H1 (cell line): ENCODE measurements at regions of chr19 and their contacts with region 1.

Region 1: GRCh38 chr19:46192992-46193650 is 36.4 kb upstream of the IGFL1 start:
- DNase-seq: no peak
- H3K4me3 ChIP-seq: no peak overlapping the region
- H3K27ac ChIP-seq: no peak overlapping the region
- H3K4me1 ChIP-seq: no peaks in the 10 kb centered on the region
- H3K27me3 ChIP-seq: no peaks in the 10 kb centered on the region
- CTCF ChIP-seq: no peak
- EP300 ChIP-seq: no peak
- POLR2A ChIP-seq: no peak
- RAD21 ChIP-seq: no peak

Region 2: GRCh38 chr19:46090444-46090843 is 102.7 kb before region 1 on chr19:
- CTCF ChIA-PET with region 1: interaction called, 10 read pairs
- POLR2A ChIA-PET with region 1: no interaction called
- DNase-seq: no peak
- H3K4me3 ChIP-seq: no peak overlapping the region
- H3K27ac ChIP-seq: no peak overlapping the region
- H3K4me1 ChIP-seq: no peaks in the 10 kb centered on the region
- H3K27me3 ChIP-seq: peaks cover 0 to 2% (median 0%) of the 10 kb centered on the region in 4 experiments; a peak in 1 of 7 replicates
- CTCF ChIP-seq: no peak
- EP300 ChIP-seq: no peak
- POLR2A ChIP-seq: no peak
- RAD21 ChIP-seq: no peak

Region 3: DNA sequence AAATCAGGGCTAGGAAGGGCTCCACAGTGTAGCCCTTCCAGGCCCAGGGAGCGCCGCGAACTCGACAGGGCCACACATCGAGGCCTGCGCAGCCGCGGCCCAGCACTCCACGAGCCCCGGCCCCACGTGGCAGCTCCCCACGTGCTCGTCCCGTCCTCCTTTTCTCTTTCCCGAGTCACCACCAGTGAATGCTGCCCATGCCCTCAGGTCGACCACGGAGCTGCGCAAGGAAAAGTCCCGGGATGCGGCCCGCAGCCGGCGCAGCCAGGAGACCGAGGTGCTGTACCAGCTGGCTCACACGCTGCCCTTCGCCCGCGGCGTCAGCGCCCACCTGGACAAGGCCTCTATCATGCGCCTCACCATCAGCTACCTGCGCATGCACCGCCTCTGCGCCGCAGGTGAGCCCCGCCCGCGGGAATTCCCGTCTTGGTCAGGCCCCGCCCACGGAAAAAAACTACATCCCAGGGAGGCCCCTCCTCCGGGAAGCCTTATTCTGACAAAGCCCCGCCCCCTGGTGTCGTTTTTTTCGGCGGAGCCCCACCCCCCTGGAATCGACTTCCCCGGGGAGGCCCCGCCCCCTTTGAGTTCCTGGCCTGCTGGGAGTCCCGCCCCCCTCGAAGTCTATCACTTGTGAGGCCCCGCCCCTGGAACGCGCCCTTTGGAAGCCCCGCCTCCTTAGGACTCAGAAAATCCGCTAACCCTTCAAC is 110.7 kb after region 1 on chr19:
- CTCF ChIA-PET with region 1: no interaction called
- POLR2A ChIA-PET with region 1: no interaction called
- DNase-seq: peak; percentile 94 to 99
- H3K4me3 ChIP-seq: peak overlapping the region; percentile 9 to 49 (median 22); a peak in 6 of 8 replicates
- H3K27ac ChIP-seq: peak overlapping the region; percentile 68
- H3K4me1 ChIP-seq: peaks cover 6 to 32% (median 27%) of the 10 kb centered on the region in 4 experiments
- H3K27me3 ChIP-seq: no peaks in the 10 kb centered on the region
- CTCF ChIP-seq: no peak
- EP300 ChIP-seq: no peak
- POLR2A ChIP-seq: peak in 1 of 2 experiments; percentile 87; a peak in 2 of 3 replicates
- RAD21 ChIP-seq: no peak

Region 4: GRCh38 chr19:46328079-46328478 is 135.0 kb after region 1 on chr19:
- CTCF ChIA-PET with region 1: no interaction called
- POLR2A ChIA-PET with region 1: no interaction called
- DNase-seq: no peak
- H3K4me3 ChIP-seq: no peak overlapping the region
- H3K27ac ChIP-seq: no peak overlapping the region
- H3K4me1 ChIP-seq: no peaks in the 10 kb centered on the region
- H3K27me3 ChIP-seq: no peaks in the 10 kb centered on the region
- CTCF ChIP-seq: no peak
- EP300 ChIP-seq: no peak
- POLR2A ChIP-seq: no peak
- RAD21 ChIP-seq: no peak